MCF 10A (cell line): ENCODE measurements at regions of chr18 and their contacts with region 1.

Region 1: DNA sequence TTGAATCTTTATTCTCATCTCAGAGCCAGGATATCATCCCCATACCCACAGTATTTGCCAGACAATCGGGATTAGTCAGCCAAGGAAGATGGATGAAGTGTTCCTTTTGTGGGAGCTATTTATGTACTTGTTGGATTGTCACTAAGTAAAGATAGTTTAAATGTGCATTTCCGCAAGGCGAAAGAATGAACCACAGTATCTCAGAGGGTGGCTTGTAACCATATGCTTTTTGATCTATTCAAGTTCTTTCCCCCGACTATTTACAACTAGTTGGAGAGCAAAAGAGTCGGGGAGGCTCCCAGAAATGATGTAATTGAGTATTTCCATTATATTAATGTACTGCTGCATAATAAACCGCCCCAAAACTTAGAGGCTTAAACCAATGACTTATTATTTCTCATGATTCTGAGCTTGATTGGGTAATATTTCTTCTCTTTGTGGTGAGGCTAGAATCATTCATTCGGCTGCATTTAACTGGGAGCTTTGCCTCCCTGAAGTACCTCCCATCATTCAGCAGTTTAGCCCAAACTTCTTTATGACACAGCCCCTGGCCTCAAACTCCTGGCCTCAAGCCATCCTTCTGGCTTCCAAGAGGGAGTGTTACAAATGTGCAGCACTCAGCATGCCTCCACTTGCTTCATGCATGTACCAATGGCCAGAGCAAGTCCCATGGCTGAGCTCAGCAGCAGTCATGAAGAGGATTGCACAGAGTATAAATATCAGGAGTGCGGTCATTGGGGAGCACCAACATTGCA is 423.7 kb downstream of the METTL4 start:
- DNase-seq: peak; percentile 95
- H3K4me3 Mint-ChIP-seq: peak overlapping the region; percentile 58
- H3K27ac Mint-ChIP-seq: peak overlapping the region; percentile 47
- H3K4me1 Mint-ChIP-seq: peaks cover 40% of the 10 kb centered on the region
- H3K27me3 Mint-ChIP-seq: no peaks in the 10 kb centered on the region
- CTCF ChIP-seq: no peak

Region 2: DNA sequence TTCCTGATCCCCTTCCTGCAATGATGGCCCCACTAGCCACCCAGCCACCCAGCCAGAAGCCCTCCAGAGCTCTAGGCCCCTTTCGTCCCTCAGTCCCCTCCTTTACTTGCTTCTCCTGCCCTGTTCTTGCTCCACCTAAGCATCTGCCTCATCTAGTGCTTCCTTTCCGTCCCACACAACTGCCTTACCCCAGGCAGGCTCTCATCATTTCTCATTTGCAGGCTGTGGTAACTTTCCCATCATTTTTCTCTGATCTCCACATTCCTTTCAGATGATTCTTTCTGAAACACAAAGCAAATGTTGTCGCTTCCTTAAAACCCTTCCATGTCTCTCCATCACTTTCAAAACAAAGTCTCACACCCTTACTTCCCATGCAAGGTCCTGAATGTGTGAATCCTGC is 36.2 kb before region 1 on chr18:
- CTCF ChIA-PET with region 1: interaction called, 4 read pairs
- POLR2A ChIA-PET with region 1: interaction called, 21 read pairs
- intact Hi-C with region 1: loop called (anchors 2 kb)
- DNase-seq: peak; percentile 36
- H3K4me3 Mint-ChIP-seq: peak overlapping the region; percentile 3
- H3K27ac Mint-ChIP-seq: peak overlapping the region; percentile 83
- H3K4me1 Mint-ChIP-seq: peaks cover 26% of the 10 kb centered on the region
- H3K27me3 Mint-ChIP-seq: no peaks in the 10 kb centered on the region
- CTCF ChIP-seq: no peak

Region 3: DNA sequence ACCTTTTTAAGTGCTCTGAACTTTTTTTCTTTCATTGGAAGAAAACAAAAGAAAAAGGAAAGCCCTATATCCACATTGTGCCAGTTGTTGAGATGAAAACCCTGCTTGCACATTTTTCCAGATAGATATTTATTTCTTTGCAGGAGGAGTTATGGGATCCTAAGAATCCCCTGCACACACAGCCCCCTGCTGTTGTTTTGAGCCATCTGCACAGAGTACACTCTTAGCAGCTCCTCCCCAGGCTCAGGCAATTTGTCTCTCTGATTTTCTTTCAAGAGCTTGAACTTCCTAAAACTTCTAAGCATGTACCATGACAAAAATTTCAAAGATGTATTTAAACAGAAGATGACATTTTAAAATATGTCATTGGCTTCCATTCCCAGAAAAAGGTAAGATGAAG is 13.3 kb before region 1 on chr18:
- CTCF ChIA-PET with region 1: interaction called, 3 read pairs
- POLR2A ChIA-PET with region 1: interaction called, 11 read pairs
- intact Hi-C with region 1: no loop called
- DNase-seq: no peak
- H3K4me3 Mint-ChIP-seq: no peak overlapping the region
- H3K27ac Mint-ChIP-seq: no peak overlapping the region
- H3K4me1 Mint-ChIP-seq: peaks cover 3% of the 10 kb centered on the region
- H3K27me3 Mint-ChIP-seq: no peaks in the 10 kb centered on the region
- CTCF ChIP-seq: no peak

Region 4: DNA sequence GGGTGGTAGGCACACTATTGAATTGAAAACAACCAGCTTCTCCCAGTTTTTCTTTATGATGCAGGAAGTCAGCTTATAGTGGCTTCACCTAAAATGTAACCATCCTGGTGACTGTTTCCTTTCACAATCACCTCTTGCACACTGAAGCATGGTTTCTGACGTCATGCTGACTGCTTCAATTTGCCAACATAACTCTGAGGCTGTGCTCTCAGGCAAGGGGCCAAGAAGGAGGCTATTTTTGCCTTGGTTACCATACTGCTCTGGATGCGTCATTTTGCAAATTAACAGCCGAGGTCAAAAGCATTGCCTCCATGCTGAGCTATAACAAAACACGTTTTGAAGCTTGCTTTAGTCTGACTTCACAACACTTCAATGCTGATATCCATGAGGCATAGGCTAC is 25.8 kb after region 1 on chr18:
- CTCF ChIA-PET with region 1: interaction called, 3 read pairs
- POLR2A ChIA-PET with region 1: interaction called, 12 read pairs
- intact Hi-C with region 1: no loop called
- DNase-seq: peak; percentile 95
- H3K4me3 Mint-ChIP-seq: no peak overlapping the region
- H3K27ac Mint-ChIP-seq: peak overlapping the region; percentile 63
- H3K4me1 Mint-ChIP-seq: peaks cover 6% of the 10 kb centered on the region
- H3K27me3 Mint-ChIP-seq: no peaks in the 10 kb centered on the region
- CTCF ChIP-seq: no peak